Thyroid gland (tissue), 4 donors: ENCODE measurements at regions of chr11 and their contacts with region 1.

Region 1: DNA sequence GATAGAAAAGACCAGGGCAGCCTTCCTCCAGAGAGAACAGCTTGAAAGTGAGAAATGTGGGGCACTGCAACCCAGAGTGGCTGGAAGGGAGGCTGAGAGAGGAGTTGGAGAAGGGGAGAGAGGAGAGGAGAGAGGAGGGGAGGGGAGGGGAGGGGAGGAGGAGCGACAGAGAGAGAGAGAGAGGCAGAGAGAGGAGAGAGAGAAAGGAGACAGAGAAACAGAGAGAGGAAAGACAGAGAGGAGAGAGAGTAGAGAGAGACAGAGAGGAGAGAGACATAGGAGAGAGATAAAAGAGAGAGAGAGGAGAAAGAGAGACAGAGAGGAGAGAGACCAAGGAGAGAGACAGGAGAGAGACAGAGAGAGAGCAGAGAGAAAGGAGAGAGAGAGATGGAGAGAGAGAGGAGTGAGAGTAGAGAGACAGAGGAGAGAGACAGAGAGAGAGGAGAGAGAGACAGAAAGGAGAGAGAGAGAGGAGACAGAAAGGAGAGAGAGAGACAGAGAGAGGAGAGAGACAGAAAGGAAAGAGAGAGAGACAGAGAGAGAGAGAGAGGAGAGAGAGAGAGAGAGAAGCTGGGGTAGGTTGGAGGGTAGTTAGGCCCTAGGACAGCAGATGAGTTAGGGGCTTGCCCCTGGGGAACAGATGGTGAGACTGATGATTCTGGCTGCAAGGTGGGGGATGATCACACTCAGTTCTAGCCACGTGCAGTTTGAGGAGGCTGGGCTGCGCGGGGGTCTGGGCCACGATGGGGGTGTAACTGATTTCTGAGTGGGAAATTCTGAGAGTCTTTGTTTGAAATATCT is 8.5 kb upstream of the SCYL1 start:
- DNase-seq: no peak
- H3K4me3 ChIP-seq: no peak overlapping the region
- H3K27ac ChIP-seq: no peak overlapping the region
- H3K4me1 ChIP-seq: peaks cover under 1 to 1% of the 10 kb centered on the region in 2 donors
- H3K27me3 ChIP-seq: no peaks in the 10 kb centered on the region
- CTCF ChIP-seq: peak in 1 of 6 experiments; percentile 18
- POLR2A ChIP-seq: no peak

Region 2: GRCh38 chr11:65373839-65374580 is 142.3 kb before region 1 on chr11:
- intact Hi-C with region 1: loop called (anchors 5 kb)
- DNase-seq: no peak
- H3K4me3 ChIP-seq: no peak overlapping the region
- H3K27ac ChIP-seq: no peak overlapping the region
- H3K4me1 ChIP-seq: peaks cover 0 to 5% of the 10 kb centered on the region in 2 donors
- H3K27me3 ChIP-seq: no peaks in the 10 kb centered on the region
- CTCF ChIP-seq: no peak
- POLR2A ChIP-seq: no peak

Region 3: GRCh38 chr11:65418711-65419459 is 97.5 kb before region 1 on chr11:
- intact Hi-C with region 1: loop called (anchors 5 kb)
- DNase-seq: peak; percentile 99 to 100
- H3K4me3 ChIP-seq: peak overlapping the region in 1 of 3 donors; percentile 38
- H3K27ac ChIP-seq: peak overlapping the region; percentile 98 to 100 (median 100)
- H3K4me1 ChIP-seq: peaks cover 53 to 56% of the 10 kb centered on the region in 2 donors
- H3K27me3 ChIP-seq: no peaks in the 10 kb centered on the region
- CTCF ChIP-seq: no peak
- POLR2A ChIP-seq: peak; percentile 46 to 72

Region 4: DNA sequence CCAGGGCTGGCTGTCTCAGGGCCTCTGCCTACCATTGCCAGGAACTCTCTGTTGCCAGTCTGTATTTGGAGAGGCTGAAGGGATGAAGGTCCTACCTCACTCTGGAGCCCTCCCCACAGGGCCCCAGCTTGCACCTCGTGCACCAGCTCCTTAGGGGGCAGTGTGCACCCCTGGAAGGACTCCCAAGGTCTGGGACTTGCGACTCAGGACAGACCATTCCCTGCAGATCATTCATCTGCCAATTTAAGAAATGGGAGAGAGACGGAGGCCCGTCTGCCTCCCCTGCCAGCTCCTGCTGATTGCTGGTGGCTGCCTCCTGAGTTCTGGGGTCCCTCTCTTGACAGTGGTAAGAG is 44.9 kb before region 1 on chr11:
- intact Hi-C with region 1: loop called (anchors 5 kb)
- DNase-seq: peak; percentile 82 to 86
- H3K4me3 ChIP-seq: no peak overlapping the region
- H3K27ac ChIP-seq: peak overlapping the region; percentile 98 to 100 (median 100)
- H3K4me1 ChIP-seq: peaks cover 28 to 68% of the 10 kb centered on the region in 2 donors
- H3K27me3 ChIP-seq: no peaks in the 10 kb centered on the region
- CTCF ChIP-seq: peak in 5 of 6 experiments; percentile 25 to 71 (median 58)
- POLR2A ChIP-seq: peak in 1 of 2 donors; percentile 14